Cardiac septum (tissue), 1 donor: ENCODE measurements at regions of chr3 and their contacts with region 1.

Region 1: GRCh38 chr3:131402391-131403039 is 20.9 kb downstream of the NUDT16 start:
- DNase-seq: no peak

Region 2: GRCh38 chr3:131349946-131350347 is 52.6 kb before region 1 on chr3:
- intact Hi-C with region 1: loop called (anchors 5 kb)
- DNase-seq: peak; percentile 79